PC-9 (cell line): ENCODE measurements at regions of chr12 and their contacts with region 1.

Region 1: GRCh38 chr12:71857657-71858056 is 18.1 kb downstream of the TBC1D15 start:
- DNase-seq: no peak
- H3K4me3 ChIP-seq: no peak overlapping the region
- H3K27ac ChIP-seq: no peak overlapping the region
- H3K4me1 ChIP-seq: no peaks in the 10 kb centered on the region
- H3K27me3 ChIP-seq: no peaks in the 10 kb centered on the region
- CTCF ChIP-seq: no peak

Region 2: GRCh38 chr12:71846322-71846940 is 11.2 kb before region 1 on chr12:
- CTCF ChIA-PET with region 1: interaction called, 16 read pairs
- POLR2A ChIA-PET with region 1: no interaction called
- intact Hi-C with region 1: no loop called
- DNase-seq: peak in 1 of 2 experiments; percentile 50
- H3K4me3 ChIP-seq: no peak overlapping the region
- H3K27ac ChIP-seq: no peak overlapping the region
- H3K4me1 ChIP-seq: peaks cover 10% of the 10 kb centered on the region
- H3K27me3 ChIP-seq: no peaks in the 10 kb centered on the region
- CTCF ChIP-seq: peak; percentile 69

Region 3: DNA sequence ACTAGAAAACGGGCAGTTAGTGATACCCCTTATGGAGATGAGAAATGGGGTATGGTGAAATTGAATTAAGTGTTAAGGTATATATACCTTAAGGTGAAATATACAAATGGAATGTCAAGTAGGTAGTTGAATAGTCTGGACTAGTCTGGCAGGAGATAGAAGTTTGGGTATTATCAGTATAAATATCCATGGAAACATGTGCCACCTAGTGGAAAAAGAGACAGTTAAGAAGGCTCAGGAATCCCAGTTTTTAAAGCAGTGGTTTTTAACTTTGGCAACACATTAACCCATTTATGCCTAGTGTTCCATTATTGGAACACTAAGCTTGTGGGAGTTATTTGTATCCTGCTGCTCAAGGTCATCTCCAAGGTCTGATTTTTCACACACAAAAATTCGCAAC is 42.4 kb after region 1 on chr12:
- CTCF ChIA-PET with region 1: no interaction called
- POLR2A ChIA-PET with region 1: interaction called, 10 read pairs
- intact Hi-C with region 1: no loop called
- DNase-seq: no peak
- H3K4me3 ChIP-seq: no peak overlapping the region
- H3K27ac ChIP-seq: no peak overlapping the region
- H3K4me1 ChIP-seq: no peaks in the 10 kb centered on the region
- H3K27me3 ChIP-seq: no peaks in the 10 kb centered on the region
- CTCF ChIP-seq: peak; percentile 39; the same call in 1 of the 2 replicates